CD4-positive, alpha-beta memory T cell (primary cell): ENCODE measurements at regions of chr15 and their contacts with region 1.

Region 1: DNA sequence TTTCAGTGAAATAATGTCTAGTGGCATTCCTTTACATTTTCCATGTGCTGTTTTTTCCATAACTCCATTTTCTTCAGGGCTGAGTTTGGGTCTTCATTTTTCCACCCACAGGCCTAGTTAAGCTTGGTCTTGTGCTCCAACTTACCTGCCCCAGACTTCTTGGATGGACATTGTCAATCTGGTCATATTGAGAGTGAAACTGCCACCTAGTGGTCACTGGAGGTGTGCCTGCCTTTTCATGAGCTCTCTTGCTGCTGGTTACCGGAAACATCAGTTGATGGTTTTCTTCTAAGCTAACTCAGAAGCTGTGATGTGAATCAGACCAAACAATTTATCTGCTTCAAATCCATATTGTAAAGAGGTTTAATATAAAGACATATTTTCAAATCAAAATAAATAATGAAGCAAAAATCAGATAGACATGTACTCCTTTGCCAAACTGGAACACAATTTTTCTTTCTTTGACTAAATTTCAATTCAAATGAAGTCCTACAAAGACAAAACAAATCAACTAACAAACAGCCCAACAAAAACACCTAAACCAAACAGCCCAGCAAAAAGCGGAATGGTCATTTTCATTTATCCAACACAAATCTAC is 135.1 kb upstream of the RASGRP1 start:
- DNase-seq: peak; percentile 61 to 73 (median 67)
- H3K4me3 ChIP-seq: no peak overlapping the region
- H3K4me3 Mint-ChIP-seq: peak overlapping the region in 5 of 8 donors; percentile 1 to 66 (median 35)
- H3K27ac ChIP-seq: peak overlapping the region; percentile 4
- H3K27ac Mint-ChIP-seq: peak overlapping the region; percentile 48 to 93 (median 86)
- H3K4me1 ChIP-seq: peaks cover 64% of the 10 kb centered on the region
- H3K4me1 Mint-ChIP-seq: peaks cover 38 to 58% (median 50%) of the 10 kb centered on the region in 4 donors
- H3K27me3 ChIP-seq: no peaks in the 10 kb centered on the region
- H3K27me3 Mint-ChIP-seq: no peaks in the 10 kb centered on the region

Region 2: GRCh38 chr15:38474155-38474757 is 225.5 kb before region 1 on chr15:
- CTCF ChIA-PET with region 1: interaction called, 146 read pairs
- POLR2A ChIA-PET with region 1: interaction called, 15 read pairs
- intact Hi-C with region 1: loop called (anchors 1 kb)
- DNase-seq: peak; percentile 57 to 73 (median 69)
- H3K4me3 ChIP-seq: no peak overlapping the region
- H3K4me3 Mint-ChIP-seq: peak overlapping the region in 1 of 8 donors; percentile 2
- H3K27ac ChIP-seq: peak overlapping the region; percentile 25
- H3K27ac Mint-ChIP-seq: peak overlapping the region; percentile 59 to 86 (median 81)
- H3K4me1 ChIP-seq: peaks cover 5% of the 10 kb centered on the region
- H3K4me1 Mint-ChIP-seq: peaks cover 8 to 9% (median 8%) of the 10 kb centered on the region in 4 donors
- H3K27me3 ChIP-seq: no peaks in the 10 kb centered on the region
- H3K27me3 Mint-ChIP-seq: no peaks in the 10 kb centered on the region

Region 3: GRCh38 chr15:38504680-38505467 is 194.9 kb before region 1 on chr15:
- CTCF ChIA-PET with region 1: interaction called, 20 read pairs
- POLR2A ChIA-PET with region 1: interaction called, 3 read pairs
- intact Hi-C with region 1: no loop called
- DNase-seq: no peak
- H3K4me3 ChIP-seq: no peak overlapping the region
- H3K4me3 Mint-ChIP-seq: no peak overlapping the region
- H3K27ac ChIP-seq: no peak overlapping the region
- H3K27ac Mint-ChIP-seq: peak overlapping the region in 6 of 7 donors; percentile 38 to 89 (median 59)
- H3K4me1 ChIP-seq: peaks cover 3% of the 10 kb centered on the region
- H3K4me1 Mint-ChIP-seq: peaks cover 2 to 15% (median 7%) of the 10 kb centered on the region in 4 donors
- H3K27me3 ChIP-seq: no peaks in the 10 kb centered on the region
- H3K27me3 Mint-ChIP-seq: no peaks in the 10 kb centered on the region

Region 4: GRCh38 chr15:38554354-38554753 is 145.4 kb before region 1 on chr15:
- CTCF ChIA-PET with region 1: interaction called, 717 read pairs
- POLR2A ChIA-PET with region 1: interaction called, 10 read pairs
- intact Hi-C with region 1: no loop called
- DNase-seq: peak in 3 of 5 donors; percentile 37 to 74 (median 51)
- H3K4me3 ChIP-seq: peak overlapping the region in 1 of 2 donors; percentile 10
- H3K4me3 Mint-ChIP-seq: peak overlapping the region; percentile 3 to 99 (median 89)
- H3K27ac ChIP-seq: peak overlapping the region; percentile 89
- H3K27ac Mint-ChIP-seq: peak overlapping the region; percentile 64 to 97 (median 79)
- H3K4me1 ChIP-seq: peaks cover 100% of the 10 kb centered on the region
- H3K4me1 Mint-ChIP-seq: peaks cover 80 to 94% (median 88%) of the 10 kb centered on the region in 4 donors
- H3K27me3 ChIP-seq: no peaks in the 10 kb centered on the region
- H3K27me3 Mint-ChIP-seq: no peaks in the 10 kb centered on the region

Region 5: GRCh38 chr15:38652998-38653397 is 46.7 kb before region 1 on chr15:
- CTCF ChIA-PET with region 1: interaction called, 10 read pairs
- POLR2A ChIA-PET with region 1: interaction called, 25 read pairs
- intact Hi-C with region 1: no loop called
- DNase-seq: peak; percentile 91 to 94 (median 91)
- H3K4me3 ChIP-seq: peak overlapping the region; percentile 11 to 37
- H3K4me3 Mint-ChIP-seq: peak overlapping the region; percentile 82 to 91 (median 86)
- H3K27ac ChIP-seq: peak overlapping the region; percentile 59
- H3K27ac Mint-ChIP-seq: peak overlapping the region; percentile 93 to 98 (median 96)
- H3K4me1 ChIP-seq: peaks cover 87% of the 10 kb centered on the region
- H3K4me1 Mint-ChIP-seq: peaks cover 61 to 83% (median 70%) of the 10 kb centered on the region in 4 donors
- H3K27me3 ChIP-seq: no peaks in the 10 kb centered on the region
- H3K27me3 Mint-ChIP-seq: no peaks in the 10 kb centered on the region